ENCODE measurements at regions of chr15 and their contacts with region 1.

Region 1: DNA sequence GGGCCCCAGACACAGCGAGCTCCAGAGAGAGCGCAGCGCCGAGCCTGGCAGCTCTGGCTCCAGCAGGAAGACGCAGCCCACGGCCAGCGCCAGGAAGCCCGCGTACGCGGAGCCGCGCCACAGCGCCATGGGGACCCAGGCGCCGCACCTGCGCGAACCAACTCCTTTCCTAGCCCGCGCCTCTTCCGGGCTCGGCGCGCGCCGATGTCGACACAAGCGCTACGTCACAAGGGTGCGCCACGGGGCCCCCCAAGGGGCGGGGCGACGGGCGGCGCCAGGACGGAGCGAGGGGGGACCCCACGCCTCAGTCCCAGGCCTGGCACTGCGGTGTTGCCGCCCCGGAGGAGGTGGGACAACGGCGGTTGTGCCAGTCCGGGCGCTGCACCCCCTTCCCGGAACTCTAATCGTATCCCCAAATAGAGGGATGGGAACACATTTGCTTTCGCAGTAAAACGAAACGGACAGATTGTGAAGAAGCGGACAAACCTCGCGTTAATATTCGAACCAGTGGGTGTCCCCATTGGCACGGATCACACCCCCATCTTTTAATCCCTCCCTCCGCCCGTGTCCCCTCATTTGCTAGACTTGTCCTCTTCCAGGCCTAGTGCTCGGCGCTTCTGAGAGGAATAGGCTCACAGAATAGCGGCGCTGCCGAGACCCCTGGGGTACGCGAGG is at the start of gene ADPGK:
- DNase-seq: peak; percentile 95
- H3K4me3 Mint-ChIP-seq: peak within 1 kb of the TSS; percentile 93
- H3K27ac Mint-ChIP-seq: peak within 1 kb of the TSS; percentile 98
- H3K4me1 Mint-ChIP-seq: peaks cover 76% of the 10 kb centered on the region
- H3K27me3 Mint-ChIP-seq: no peaks in the 10 kb centered on the region
- total RNA-seq, gene ADPGK: 83.6 to 84.7 TPM

Region 2: DNA sequence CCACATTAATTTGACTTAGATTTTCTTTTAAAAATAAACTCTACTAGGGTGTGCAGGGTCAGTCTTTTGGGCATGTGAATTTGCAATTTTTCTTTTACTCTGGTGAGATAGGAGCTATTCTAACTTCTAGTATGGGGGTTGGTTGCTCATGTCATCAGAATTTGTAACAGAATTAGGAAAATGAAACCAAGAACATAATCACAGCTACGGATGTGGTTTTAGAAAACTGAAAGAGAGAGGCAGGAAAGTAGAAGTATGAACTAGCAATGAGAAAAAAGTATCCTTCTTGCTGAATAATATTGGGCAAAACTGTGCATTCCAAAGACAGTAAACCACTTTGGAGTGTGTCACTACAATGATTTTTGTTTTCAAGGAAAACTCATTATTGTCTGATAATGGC is 43.5 kb before region 1 on chr15:
- CTCF ChIA-PET with region 1: interaction called, 3 read pairs
- POLR2A ChIA-PET with region 1: interaction called, 23 read pairs
- DNase-seq: no peak
- H3K4me3 Mint-ChIP-seq: peak overlapping the region; percentile 46
- H3K27ac Mint-ChIP-seq: peak overlapping the region; percentile 83
- H3K4me1 Mint-ChIP-seq: peaks cover 46% of the 10 kb centered on the region
- H3K27me3 Mint-ChIP-seq: no peaks in the 10 kb centered on the region

Region 3: DNA sequence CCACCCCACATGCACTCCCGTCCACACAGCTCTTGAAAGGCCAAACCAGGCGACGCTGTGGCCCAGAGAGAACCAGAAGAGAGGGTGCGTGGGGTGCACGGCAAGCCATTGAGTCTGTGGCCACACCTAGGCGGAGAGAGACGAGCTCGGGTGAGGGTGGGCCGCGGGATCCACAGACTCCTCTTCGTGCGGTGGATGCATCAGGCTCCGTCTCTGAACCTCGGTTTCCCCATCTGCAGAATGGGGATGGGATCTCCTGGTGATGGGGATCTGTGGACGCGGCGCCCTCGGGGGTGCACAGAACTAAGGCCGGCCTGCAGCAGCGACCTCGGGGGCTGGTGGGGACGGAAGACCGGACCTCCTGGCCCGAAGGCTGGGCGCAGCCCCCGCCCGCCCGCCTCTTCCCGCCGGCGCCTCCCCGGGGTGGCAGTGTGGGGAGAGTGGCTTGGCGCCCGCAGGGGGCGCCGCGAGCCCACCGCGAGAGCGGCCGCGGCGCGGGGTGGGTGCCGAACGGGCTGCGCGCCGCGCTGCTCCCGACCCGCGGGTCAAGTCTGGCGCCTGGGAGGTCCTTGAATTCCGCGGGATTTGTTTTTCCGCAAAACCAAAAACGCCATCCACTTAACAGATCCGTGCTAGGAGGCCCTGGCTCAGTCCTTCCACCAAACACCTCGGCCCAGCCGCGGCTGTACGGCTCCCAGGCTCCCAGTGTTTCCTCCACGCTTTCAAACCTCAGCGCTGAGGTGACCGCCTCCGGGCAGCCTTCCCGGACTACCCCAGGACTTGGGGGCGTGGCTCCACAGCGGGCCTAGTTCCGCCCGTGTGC is 13.0 kb after region 1 on chr15:
- CTCF ChIA-PET with region 1: interaction called, 5 read pairs
- POLR2A ChIA-PET with region 1: interaction called, 14 read pairs
- DNase-seq: peak; percentile 46
- H3K4me3 Mint-ChIP-seq: peak overlapping the region; percentile 75
- H3K27ac Mint-ChIP-seq: peak overlapping the region; percentile 32
- H3K4me1 Mint-ChIP-seq: peaks cover 34% of the 10 kb centered on the region
- H3K27me3 Mint-ChIP-seq: peaks cover 12% of the 10 kb centered on the region

Region 4: DNA sequence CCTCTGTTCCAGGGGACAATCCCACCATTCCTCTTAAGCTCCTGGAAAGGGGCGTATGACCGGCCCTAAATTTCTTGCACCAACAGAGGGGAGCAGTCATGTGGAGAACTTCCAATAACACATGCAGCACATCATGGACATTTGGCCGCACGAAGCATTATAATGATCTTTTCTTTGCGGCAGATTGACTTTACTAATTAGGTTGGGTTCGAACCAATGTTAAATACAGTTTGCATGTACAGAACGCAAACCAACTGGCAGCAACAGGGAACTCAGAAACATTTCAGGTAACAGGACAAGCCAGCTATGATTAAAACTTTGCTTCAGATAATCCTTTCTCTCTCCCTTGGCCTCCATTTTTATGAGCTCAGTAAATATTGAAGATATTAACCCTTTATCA is 100.6 kb after region 1 on chr15:
- CTCF ChIA-PET with region 1: no interaction called
- POLR2A ChIA-PET with region 1: no interaction called
- DNase-seq: no peak
- H3K4me3 Mint-ChIP-seq: no peak overlapping the region
- H3K27ac Mint-ChIP-seq: no peak overlapping the region
- H3K4me1 Mint-ChIP-seq: no peaks in the 10 kb centered on the region
- H3K27me3 Mint-ChIP-seq: peaks cover 5% of the 10 kb centered on the region

Region 5: GRCh38 chr15:73038220-73038619 is 254.5 kb after region 1 on chr15:
- CTCF ChIA-PET with region 1: no interaction called
- POLR2A ChIA-PET with region 1: no interaction called
- DNase-seq: no peak
- H3K4me3 Mint-ChIP-seq: no peak overlapping the region
- H3K27ac Mint-ChIP-seq: no peak overlapping the region
- H3K4me1 Mint-ChIP-seq: no peaks in the 10 kb centered on the region
- H3K27me3 Mint-ChIP-seq: peaks cover 9% of the 10 kb centered on the region